Heart right ventricle (tissue), 16 donors: ENCODE measurements at regions of chr19 and their contacts with region 1.

Region 1: GRCh38 chr19:12681074-12681951 is at the start of gene DHPS:
- DNase-seq: peak; percentile 85 to 97
- ATAC-seq: peak; percentile 89 to 96 (median 94)
- H3K4me3 ChIP-seq: peak within 1 kb of the TSS; percentile 71 to 100 (median 82)
- H3K27ac ChIP-seq: peak within 1 kb of the TSS; percentile 91 to 98 (median 94)
- H3K4me1 ChIP-seq: peaks cover 0 to 29% (median 13%) of the 10 kb centered on the region in 9 donors
- H3K27me3 ChIP-seq: no peaks in the 10 kb centered on the region
- CTCF ChIP-seq: no peak
- total RNA-seq, gene DHPS: 43.6 to 59.3 (median 49.7) TPM

Region 2: GRCh38 chr19:12564016-12564664 is 117.2 kb before region 1 on chr19:
- intact Hi-C with region 1: loop called in 4 of 10 experiments (anchors 5 to 10 kb)
- DNase-seq: peak; percentile 89 to 91
- ATAC-seq: peak; percentile 89 to 94 (median 92)
- H3K4me3 ChIP-seq: no peak overlapping the region
- H3K27ac ChIP-seq: no peak overlapping the region
- H3K4me1 ChIP-seq: peaks cover 0 to 8% (median 0%) of the 10 kb centered on the region in 9 donors
- H3K27me3 ChIP-seq: no peaks in the 10 kb centered on the region
- CTCF ChIP-seq: peak; percentile 89 to 98 (median 97)

Region 3: GRCh38 chr19:12722566-12723380 is 41.5 kb after region 1 on chr19:
- intact Hi-C with region 1: loop called in 1 of 10 experiments (anchors 5 kb)
- DNase-seq: peak; percentile 93 to 99
- ATAC-seq: peak; percentile 87 to 97 (median 94)
- H3K4me3 ChIP-seq: peak overlapping the region; percentile 58 to 83 (median 70)
- H3K27ac ChIP-seq: peak overlapping the region; percentile 89 to 97 (median 94)
- H3K4me1 ChIP-seq: peaks cover 7 to 50% (median 34%) of the 10 kb centered on the region in 9 donors
- H3K27me3 ChIP-seq: no peaks in the 10 kb centered on the region
- CTCF ChIP-seq: no peak

Region 4: GRCh38 chr19:13012690-13013608 is 331.6 kb after region 1 on chr19:
- intact Hi-C with region 1: no loop called
- DNase-seq: peak in 1 of 2 donors; percentile 57
- ATAC-seq: peak in 6 of 8 donors; percentile 26 to 52 (median 42)
- H3K4me3 ChIP-seq: peak overlapping the region in 9 of 10 donors; percentile 21 to 49 (median 42)
- H3K27ac ChIP-seq: peak overlapping the region; percentile 46 to 96 (median 79)
- H3K4me1 ChIP-seq: peaks cover 43 to 100% (median 85%) of the 10 kb centered on the region in 9 donors
- H3K27me3 ChIP-seq: peaks cover 0 to 64% (median 0%) of the 10 kb centered on the region in 7 donors
- CTCF ChIP-seq: no peak